ENCODE measurements at regions of chr5 and their contacts with region 1.

Region 1: GRCh38 chr5:130874861-130875417 is 290.1 kb downstream of the HINT1 start:
- DNase-seq: no peak

Region 2: DNA sequence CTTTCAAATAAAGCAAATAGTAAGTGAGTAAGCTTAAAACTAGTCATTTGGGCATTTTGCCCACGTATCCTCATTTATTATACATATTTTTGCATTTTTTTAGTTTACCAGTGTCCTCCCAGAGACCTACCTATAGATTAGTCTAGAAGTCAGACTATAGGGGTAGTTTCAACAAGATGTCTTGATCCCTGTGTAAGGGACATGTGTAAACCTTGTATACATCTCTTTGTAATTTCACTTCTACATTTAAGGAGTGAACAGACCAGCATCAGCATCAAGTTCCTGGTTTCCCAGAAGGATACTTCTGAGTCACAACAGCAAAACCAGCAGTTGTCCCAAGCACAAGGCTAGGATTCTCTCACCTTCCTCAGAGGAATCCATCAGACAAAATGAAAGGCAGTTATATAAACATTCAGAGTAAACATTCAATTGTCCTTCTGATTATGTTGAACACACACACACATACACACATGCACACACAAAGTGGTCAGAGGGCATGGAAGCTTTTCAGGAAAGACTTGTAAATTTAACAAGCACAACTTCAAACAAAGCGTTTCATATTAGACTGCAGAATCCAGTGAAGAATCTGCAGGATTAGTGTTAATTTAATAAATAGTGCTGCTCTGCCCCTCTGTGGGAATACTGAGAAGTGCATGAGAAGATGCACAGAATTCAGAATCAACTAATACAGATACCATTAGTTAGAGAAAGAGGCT is 234.8 kb after region 1 on chr5:
- in situ Hi-C with region 1: loop called (anchors 25 kb)
- DNase-seq: peak; percentile 72

Region 3: DNA sequence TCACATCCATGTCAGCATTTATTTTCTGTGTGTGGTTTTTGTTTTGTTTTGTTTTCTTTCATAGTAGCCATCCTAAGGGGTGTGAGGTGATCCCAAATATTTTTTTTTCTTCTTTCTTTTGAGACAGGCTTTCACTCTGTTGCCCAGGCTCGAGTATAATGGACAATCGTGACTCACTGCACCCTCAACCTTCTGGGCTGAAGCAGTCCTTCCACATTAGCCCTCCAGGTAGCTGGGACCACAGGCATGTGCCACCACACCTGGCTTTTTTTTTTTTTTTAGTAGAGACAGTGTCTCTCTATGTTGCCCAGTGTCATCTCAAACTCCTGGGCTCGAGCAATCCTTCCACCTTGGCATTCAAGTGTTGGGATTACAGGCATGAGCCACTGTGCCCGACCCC is 448.0 kb after region 1 on chr5:
- in situ Hi-C with region 1: no loop called
- DNase-seq: no peak